ENCODE measurements at regions of chr17 and their contacts with region 1.

Region 1: GRCh38 chr17:63611354-63611753 is 10.7 kb downstream of the TACO1 start:
- DNase-seq: no peak
- H3K4me3 ChIP-seq: no peak overlapping the region
- H3K27ac ChIP-seq: no peak overlapping the region
- H3K4me1 ChIP-seq: no peaks in the 10 kb centered on the region
- H3K27me3 ChIP-seq: no peaks in the 10 kb centered on the region
- CTCF ChIP-seq: no peak
- POLR2A ChIP-seq: no peak

Region 2: GRCh38 chr17:63445979-63446691 is 165.2 kb before region 1 on chr17 and contains the start of gene CYB561:
- CTCF ChIA-PET with region 1: interaction called, 10 read pairs
- POLR2A ChIA-PET with region 1: no interaction called
- dilution Hi-C with region 1: no loop called
- intact Hi-C with region 1: no loop called
- DNase-seq: peak; percentile 63
- H3K4me3 ChIP-seq: peak within 1 kb of the TSS; percentile 2 to 49 (median 44)
- H3K27ac ChIP-seq: peak within 1 kb of the TSS; percentile 80
- H3K4me1 ChIP-seq: peaks cover 41% of the 10 kb centered on the region
- H3K27me3 ChIP-seq: no peaks in the 10 kb centered on the region
- CTCF ChIP-seq: peak; percentile 29 to 61
- POLR2A ChIP-seq: no peak
- total RNA-seq, gene CYB561: 71.1 and 72.4 TPM in 2 replicates

Region 3: GRCh38 chr17:63503334-63503692 is 108.0 kb before region 1 on chr17:
- CTCF ChIA-PET with region 1: interaction called, 10 read pairs
- POLR2A ChIA-PET with region 1: no interaction called
- dilution Hi-C with region 1: no loop called
- intact Hi-C with region 1: loop called (anchors 5 kb)
- DNase-seq: no peak
- H3K4me3 ChIP-seq: no peak overlapping the region
- H3K27ac ChIP-seq: no peak overlapping the region
- H3K4me1 ChIP-seq: no peaks in the 10 kb centered on the region
- H3K27me3 ChIP-seq: peaks cover 2 to 16% of the 10 kb centered on the region in 2 experiments
- CTCF ChIP-seq: no peak
- POLR2A ChIP-seq: no peak

Region 4: GRCh38 chr17:63579540-63580001 is 31.8 kb before region 1 on chr17:
- CTCF ChIA-PET with region 1: interaction called, 15 read pairs
- POLR2A ChIA-PET with region 1: no interaction called
- dilution Hi-C with region 1: no loop called
- intact Hi-C with region 1: no loop called
- DNase-seq: peak; percentile 68
- H3K4me3 ChIP-seq: no peak overlapping the region
- H3K27ac ChIP-seq: peak overlapping the region; percentile 73
- H3K4me1 ChIP-seq: peaks cover 16% of the 10 kb centered on the region
- H3K27me3 ChIP-seq: no peaks in the 10 kb centered on the region
- CTCF ChIP-seq: no peak
- POLR2A ChIP-seq: no peak

Region 5: GRCh38 chr17:63621766-63622519 is 10.6 kb after region 1 on chr17 and contains the start of gene MAP3K3:
- CTCF ChIA-PET with region 1: interaction called, 32 read pairs
- POLR2A ChIA-PET with region 1: interaction called, 4 read pairs
- dilution Hi-C with region 1: no loop called
- intact Hi-C with region 1: no loop called
- DNase-seq: peak; percentile 100
- H3K4me3 ChIP-seq: peak within 1 kb of the TSS; percentile 78 to 97 (median 80)
- H3K27ac ChIP-seq: peak within 1 kb of the TSS; percentile 53
- H3K4me1 ChIP-seq: peaks cover 27% of the 10 kb centered on the region
- H3K27me3 ChIP-seq: no peaks in the 10 kb centered on the region
- CTCF ChIP-seq: peak in 1 of 2 donors; percentile 24
- POLR2A ChIP-seq: peak; percentile 93
- total RNA-seq, gene MAP3K3: 81.0 and 91.4 TPM in 2 replicates

Measured in endothelial cell of umbilical vein (primary cell).